Natural killer cell (primary cell): ENCODE measurements at regions of chr15 and their contacts with region 1.

Region 1: DNA sequence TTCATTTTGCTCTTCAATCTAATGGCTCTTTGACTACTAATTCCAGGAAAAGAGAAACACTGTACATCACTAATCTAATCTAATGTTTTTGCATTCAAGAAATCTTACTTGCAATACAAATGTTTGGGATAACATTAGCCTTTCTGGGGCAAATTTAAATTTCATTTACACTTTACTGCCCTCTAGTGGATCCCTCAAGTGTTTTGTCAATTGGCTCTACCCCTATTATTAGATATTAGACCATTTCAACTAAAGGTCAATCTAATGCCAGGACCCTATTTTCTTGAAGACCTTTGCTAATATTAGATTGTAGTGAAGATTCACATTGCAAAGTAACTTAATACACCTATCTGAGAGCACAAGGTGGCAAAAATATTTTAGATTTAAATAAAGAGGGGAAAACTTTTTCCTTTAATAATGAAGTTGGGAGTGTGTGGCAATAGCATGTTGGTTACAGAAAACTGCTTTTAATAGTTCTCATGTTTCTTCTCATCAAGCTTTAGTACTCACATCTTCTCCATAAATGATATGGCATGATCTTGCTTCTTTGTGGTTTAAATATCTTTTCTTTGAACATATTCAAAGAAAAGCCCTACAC is 5.0 kb downstream of the C2CD4A start:
- DNase-seq: peak in 1 of 2 donors; percentile 70
- ATAC-seq: peak in 1 of 3 donors; percentile 25
- H3K4me3 ChIP-seq: no peak overlapping the region
- H3K4me3 Mint-ChIP-seq: no peak overlapping the region
- H3K27ac ChIP-seq: no peak overlapping the region
- H3K27ac Mint-ChIP-seq: no peak overlapping the region
- H3K4me1 ChIP-seq: peaks cover 9% of the 10 kb centered on the region
- H3K4me1 Mint-ChIP-seq: peaks cover 11 to 14% of the 10 kb centered on the region in 2 donors
- H3K27me3 ChIP-seq: peaks cover 15% of the 10 kb centered on the region
- H3K27me3 Mint-ChIP-seq: peaks cover 21 to 23% of the 10 kb centered on the region in 2 donors
- CTCF ChIP-seq: peak; percentile 90

Region 2: GRCh38 chr15:61871926-61872522 is 199.8 kb before region 1 on chr15:
- intact Hi-C with region 1: no loop called
- DNase-seq: peak in 1 of 2 donors; percentile 28
- ATAC-seq: peak in 2 of 3 donors; percentile 29 to 60
- H3K4me3 ChIP-seq: no peak overlapping the region
- H3K4me3 Mint-ChIP-seq: no peak overlapping the region
- H3K27ac ChIP-seq: no peak overlapping the region
- H3K27ac Mint-ChIP-seq: no peak overlapping the region
- H3K4me1 ChIP-seq: no peaks in the 10 kb centered on the region
- H3K4me1 Mint-ChIP-seq: no peaks in the 10 kb centered on the region
- H3K27me3 ChIP-seq: no peaks in the 10 kb centered on the region
- H3K27me3 Mint-ChIP-seq: no peaks in the 10 kb centered on the region
- CTCF ChIP-seq: peak; percentile 62

Region 3: GRCh38 chr15:62021991-62022600 is 49.7 kb before region 1 on chr15:
- intact Hi-C with region 1: loop called (anchors 10 kb)
- DNase-seq: no peak
- ATAC-seq: no peak
- H3K4me3 ChIP-seq: no peak overlapping the region
- H3K4me3 Mint-ChIP-seq: no peak overlapping the region
- H3K27ac ChIP-seq: no peak overlapping the region
- H3K27ac Mint-ChIP-seq: no peak overlapping the region
- H3K4me1 ChIP-seq: no peaks in the 10 kb centered on the region
- H3K4me1 Mint-ChIP-seq: peaks cover 0 to 7% of the 10 kb centered on the region in 2 donors
- H3K27me3 ChIP-seq: no peaks in the 10 kb centered on the region
- H3K27me3 Mint-ChIP-seq: no peaks in the 10 kb centered on the region
- CTCF ChIP-seq: peak; percentile 17

Region 4: DNA sequence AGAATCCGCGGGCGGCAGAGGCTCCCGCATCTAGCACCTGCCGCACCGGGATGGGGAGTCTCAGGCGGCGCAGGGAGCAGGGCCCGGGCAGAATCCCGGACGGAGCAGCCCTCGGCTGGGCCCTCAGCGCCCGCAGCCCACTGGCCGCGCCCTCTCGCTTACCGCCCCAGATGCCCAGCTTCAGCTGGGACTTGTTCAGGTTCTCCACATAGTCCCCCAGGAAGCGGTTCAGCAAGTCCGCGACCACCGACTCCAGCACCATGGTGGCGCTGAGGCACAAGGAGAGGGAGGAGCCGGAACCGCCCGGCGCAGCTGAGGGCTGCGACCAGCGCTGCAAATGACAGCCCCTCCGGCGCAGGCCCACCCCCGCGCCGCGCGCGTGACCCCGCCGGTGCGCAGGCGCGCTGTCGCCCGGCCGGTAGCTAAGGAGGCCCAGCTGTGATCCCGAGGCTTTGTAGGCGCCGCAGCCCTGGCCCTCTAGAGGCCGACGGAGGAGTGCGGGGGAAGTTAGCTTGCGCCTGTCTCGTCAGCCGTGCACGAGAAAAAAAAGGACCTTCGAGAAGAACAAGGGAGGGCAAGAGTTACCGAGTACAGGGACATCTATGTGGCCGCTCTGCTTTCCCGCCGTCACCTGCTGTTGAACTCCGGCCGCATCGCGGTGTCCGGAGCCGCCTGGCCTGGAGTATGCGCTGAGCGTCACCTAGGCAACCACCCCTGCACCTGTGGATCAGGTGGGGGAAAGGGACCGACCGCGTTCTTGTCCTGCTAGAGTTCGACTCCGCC is 11.5 kb before region 1 on chr15 and contains the start of gene VPS13C:
- intact Hi-C with region 1: no loop called
- DNase-seq: peak; percentile 94 to 97
- ATAC-seq: peak; percentile 82 to 95 (median 89)
- H3K4me3 ChIP-seq: peak within 1 kb of the TSS; percentile 66
- H3K4me3 Mint-ChIP-seq: peak within 1 kb of the TSS; percentile 97
- H3K27ac ChIP-seq: peak within 1 kb of the TSS; percentile 87
- H3K27ac Mint-ChIP-seq: peak within 1 kb of the TSS; percentile 96 to 98
- H3K4me1 ChIP-seq: peaks cover 9% of the 10 kb centered on the region
- H3K4me1 Mint-ChIP-seq: peaks cover 47 to 61% of the 10 kb centered on the region in 2 donors
- H3K27me3 ChIP-seq: peaks cover 5% of the 10 kb centered on the region
- H3K27me3 Mint-ChIP-seq: peaks cover 11 to 21% of the 10 kb centered on the region in 2 donors
- CTCF ChIP-seq: peak; percentile 87
- total RNA-seq, gene VPS13C: 155 to 204 (median 164) TPM